ENCODE measurements at regions of chr9 and their contacts with region 1.

Region 1: GRCh38 chr9:129038109-129038852 is 1.9 kb downstream of the MIGA2 start:
- DNase-seq: no peak
- H3K4me3 ChIP-seq: peak overlapping the region; percentile 95
- H3K27ac ChIP-seq: no peak overlapping the region
- H3K4me1 ChIP-seq: peaks cover 22% of the 10 kb centered on the region
- CTCF ChIP-seq: no peak

Region 2: GRCh38 chr9:128881901-128882681 is 156.2 kb before region 1 on chr9 and contains the starts of genes KYAT1 and LRRC8A:
- CTCF ChIA-PET with region 1: no interaction called
- POLR2A ChIA-PET with region 1: no interaction called
- intact Hi-C with region 1: no loop called
- DNase-seq: peak; percentile 99
- H3K4me3 ChIP-seq: peak within 1 kb of the TSS; percentile 95
- H3K27ac ChIP-seq: peak within 1 kb of the TSS; percentile 91
- H3K4me1 ChIP-seq: peaks cover 40% of the 10 kb centered on the region
- CTCF ChIP-seq: no peak
- total RNA-seq, gene KYAT1: 38.2 and 44.7 TPM in 2 replicates
- total RNA-seq, gene LRRC8A: 20.0 and 26.9 TPM in 2 replicates

Region 3: DNA sequence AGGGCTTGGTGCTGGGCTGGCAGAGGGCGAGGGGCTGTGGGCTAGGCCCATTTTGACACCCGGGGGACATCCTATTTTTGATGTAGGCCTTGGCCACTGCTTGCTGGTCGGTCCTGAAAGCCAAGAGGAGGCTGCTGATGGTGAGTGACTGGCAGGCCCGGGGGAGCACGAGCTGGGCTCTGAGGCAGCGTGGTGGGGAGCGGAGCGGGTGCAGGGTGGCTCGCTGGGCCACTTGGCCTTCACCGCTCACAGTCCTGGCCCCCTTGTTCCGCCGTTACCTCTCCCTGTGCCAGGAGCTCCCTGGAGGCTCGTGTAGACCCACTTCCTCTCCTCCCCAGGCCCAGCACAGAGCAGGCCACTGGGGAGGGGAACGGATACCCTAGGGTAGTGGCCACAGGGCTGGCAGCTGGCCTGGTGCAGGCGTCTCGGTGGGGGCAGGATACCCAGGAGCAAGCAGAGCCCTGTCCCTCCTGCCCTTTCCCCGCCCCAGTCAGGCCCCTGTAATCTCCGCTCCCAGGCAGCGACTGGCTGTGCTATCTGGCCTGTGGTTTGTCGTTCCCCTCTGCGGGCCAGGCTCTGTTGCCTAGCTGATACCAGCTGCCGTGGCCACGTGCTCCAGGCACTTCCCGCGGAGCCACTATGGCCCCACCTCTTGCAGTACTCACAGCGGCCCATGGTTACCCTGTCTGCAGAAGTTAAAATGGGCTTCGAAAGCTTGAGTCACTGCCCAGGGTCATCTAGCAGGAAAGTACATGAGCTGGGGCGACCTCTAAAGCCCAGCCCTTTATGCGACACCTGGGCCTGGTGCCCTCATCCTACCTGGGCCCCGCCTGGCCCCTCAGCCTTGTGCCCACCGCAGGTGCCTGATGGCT is 30.9 kb after region 1 on chr9:
- CTCF ChIA-PET with region 1: no interaction called
- POLR2A ChIA-PET with region 1: interaction called, 14 read pairs
- intact Hi-C with region 1: no loop called
- DNase-seq: no peak
- H3K4me3 ChIP-seq: no peak overlapping the region
- H3K27ac ChIP-seq: no peak overlapping the region
- H3K4me1 ChIP-seq: no peaks in the 10 kb centered on the region
- CTCF ChIP-seq: no peak

Measured in OCI-LY7 (cell line).